Activated CD8-positive, alpha-beta T cell treated with anti-CD3 and anti-CD28 coated beads, Interleukin-2, amount 10 ng/mL, durations not matched to agents 7 days and 5 days (primary cell): ENCODE measurements at regions of chr17 and their contacts with region 1.

Region 1: GRCh38 chr17:38824899-38825761 is at the start of gene CWC25:
- DNase-seq: peak; percentile 96
- ATAC-seq: peak; percentile 82
- H3K4me3 Mint-ChIP-seq: peak within 1 kb of the TSS; percentile 100
- H3K27ac Mint-ChIP-seq: peak within 1 kb of the TSS; percentile 97
- H3K4me1 Mint-ChIP-seq: peaks cover 35% of the 10 kb centered on the region
- H3K27me3 Mint-ChIP-seq: no peaks in the 10 kb centered on the region
- total RNA-seq, gene CWC25: 29.6 to 30.9 TPM

Region 2: DNA sequence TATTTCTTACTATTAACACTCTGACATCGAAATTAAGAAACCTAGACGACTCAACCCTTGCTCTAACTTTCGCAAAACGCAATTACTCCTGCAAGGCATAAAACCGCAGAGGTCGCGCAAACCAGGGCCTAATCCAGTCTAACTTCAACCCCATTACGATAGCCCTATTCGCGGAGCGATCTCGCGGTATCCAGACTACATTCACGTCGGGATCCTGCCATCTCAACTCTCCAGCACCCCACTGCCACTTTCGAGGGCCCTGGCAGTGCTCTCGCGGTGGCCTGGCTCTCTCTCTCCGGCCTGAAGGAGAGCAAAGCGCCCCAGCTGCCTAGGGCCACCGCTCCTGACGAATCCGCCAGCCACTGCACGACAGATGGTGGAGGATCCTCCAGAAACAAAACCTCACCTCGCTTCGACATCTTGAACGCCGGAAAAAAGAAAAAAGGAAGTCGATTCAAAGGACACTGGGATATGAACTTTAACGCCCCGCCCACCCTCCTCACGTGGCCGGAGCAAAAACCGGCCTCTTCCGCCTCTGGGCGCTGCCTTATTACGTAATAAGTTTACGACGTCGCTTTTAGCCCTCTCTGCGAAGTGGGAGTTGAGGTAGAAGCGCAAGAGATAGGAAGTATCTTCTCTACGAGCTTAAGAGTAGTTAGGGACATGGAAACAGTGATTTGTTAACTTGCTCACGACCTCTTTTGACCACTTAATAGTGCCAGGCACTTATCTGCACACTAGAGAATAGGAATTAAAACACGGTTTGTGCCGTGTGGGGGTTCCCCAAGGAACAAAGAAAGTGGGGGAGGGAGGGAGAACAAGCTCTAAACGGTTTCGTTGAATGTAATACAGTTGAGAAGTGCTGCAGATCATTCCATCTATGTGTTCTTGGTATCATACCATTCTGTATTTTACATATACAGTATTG is 28.4 kb after region 1 on chr17 and contains the start of gene RPL23:
- CTCF ChIA-PET with region 1: interaction called, 5 read pairs
- POLR2A ChIA-PET with region 1: interaction called, 45 read pairs
- DNase-seq: peak; percentile 96
- ATAC-seq: peak; percentile 88
- H3K4me3 Mint-ChIP-seq: peak within 1 kb of the TSS; percentile 99
- H3K27ac Mint-ChIP-seq: peak within 1 kb of the TSS; percentile 99
- H3K4me1 Mint-ChIP-seq: peaks cover 39% of the 10 kb centered on the region
- H3K27me3 Mint-ChIP-seq: no peaks in the 10 kb centered on the region
- total RNA-seq, gene RPL23: 1,130 to 1,164 TPM